Lower lobe of right lung (tissue), 2 donors: ENCODE measurements at regions of chr4 and their contacts with region 1.

Region 1: DNA sequence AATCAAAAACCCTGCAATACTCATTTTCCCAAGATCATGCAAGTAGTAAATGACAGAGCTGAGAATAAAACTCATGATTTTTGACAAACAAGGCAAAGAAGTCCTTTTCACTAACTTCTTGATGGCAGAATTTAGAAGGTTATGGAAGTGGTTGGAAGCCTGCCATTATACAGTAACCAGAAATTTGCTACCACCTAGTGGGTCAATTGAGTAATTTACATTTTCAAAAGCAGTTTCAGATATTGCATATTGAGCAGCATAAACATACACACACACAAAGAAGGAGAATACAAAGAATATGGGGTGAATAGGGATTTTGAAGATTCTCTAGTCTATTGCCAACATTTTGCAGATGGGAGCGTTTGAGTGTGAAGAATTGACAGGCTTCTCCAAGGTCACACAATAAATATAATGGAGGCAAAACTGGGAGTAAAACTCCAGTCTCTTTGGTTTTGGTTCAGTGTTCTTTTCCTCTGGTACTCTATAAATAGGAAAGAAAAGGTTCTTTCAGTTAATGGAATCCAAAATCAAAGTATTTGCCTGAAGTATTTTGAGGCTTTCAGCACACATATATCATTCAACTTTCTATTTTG is 70.2 kb downstream of the GC start:
- DNase-seq: no peak
- ATAC-seq: peak; percentile 66 to 70
- H3K4me3 ChIP-seq: no peak overlapping the region
- H3K27ac ChIP-seq: no peak overlapping the region
- H3K4me1 ChIP-seq: no peaks in the 10 kb centered on the region
- H3K27me3 ChIP-seq: no peaks in the 10 kb centered on the region
- CTCF ChIP-seq: peak; percentile 59

Region 2: GRCh38 chr4:71184195-71184781 is 529.4 kb before region 1 on chr4:
- intact Hi-C with region 1: loop called (anchors 10 kb)
- DNase-seq: no peak
- ATAC-seq: peak; percentile 15 to 28
- H3K4me3 ChIP-seq: no peak overlapping the region
- H3K27ac ChIP-seq: no peak overlapping the region
- H3K4me1 ChIP-seq: peaks cover 5% of the 10 kb centered on the region
- H3K27me3 ChIP-seq: peaks cover 10% of the 10 kb centered on the region
- CTCF ChIP-seq: peak; percentile 65

Region 3: GRCh38 chr4:71648448-71648847 is 65.3 kb before region 1 on chr4:
- intact Hi-C with region 1: no loop called
- DNase-seq: no peak
- ATAC-seq: no peak
- H3K4me3 ChIP-seq: no peak overlapping the region
- H3K27ac ChIP-seq: no peak overlapping the region
- H3K4me1 ChIP-seq: no peaks in the 10 kb centered on the region
- H3K27me3 ChIP-seq: no peaks in the 10 kb centered on the region
- CTCF ChIP-seq: no peak

Region 4: GRCh38 chr4:71663780-71664179 is 49.9 kb before region 1 on chr4:
- intact Hi-C with region 1: no loop called
- DNase-seq: no peak
- ATAC-seq: peak in 1 of 2 donors; percentile 16
- H3K4me3 ChIP-seq: no peak overlapping the region
- H3K27ac ChIP-seq: no peak overlapping the region
- H3K4me1 ChIP-seq: no peaks in the 10 kb centered on the region
- H3K27me3 ChIP-seq: no peaks in the 10 kb centered on the region
- CTCF ChIP-seq: no peak